Activated CD4-positive, alpha-beta T cell treated with anti-CD3 and anti-CD28 coated beads for 36 hours (primary cell): ENCODE measurements at regions of chr15 and their contacts with region 1.

Region 1: GRCh38 chr15:37100109-37100965 is at the start of gene MEIS2:
- DNase-seq: peak; percentile 70
- ATAC-seq: peak; percentile 63
- H3K4me3 Mint-ChIP-seq: peak within 1 kb of the TSS; percentile 80
- H3K27ac Mint-ChIP-seq: peak within 1 kb of the TSS; percentile 51
- H3K4me1 Mint-ChIP-seq: peaks cover 37% of the 10 kb centered on the region
- H3K27me3 Mint-ChIP-seq: peaks cover 82% of the 10 kb centered on the region
- total RNA-seq, gene MEIS2: not detected

Region 2: DNA sequence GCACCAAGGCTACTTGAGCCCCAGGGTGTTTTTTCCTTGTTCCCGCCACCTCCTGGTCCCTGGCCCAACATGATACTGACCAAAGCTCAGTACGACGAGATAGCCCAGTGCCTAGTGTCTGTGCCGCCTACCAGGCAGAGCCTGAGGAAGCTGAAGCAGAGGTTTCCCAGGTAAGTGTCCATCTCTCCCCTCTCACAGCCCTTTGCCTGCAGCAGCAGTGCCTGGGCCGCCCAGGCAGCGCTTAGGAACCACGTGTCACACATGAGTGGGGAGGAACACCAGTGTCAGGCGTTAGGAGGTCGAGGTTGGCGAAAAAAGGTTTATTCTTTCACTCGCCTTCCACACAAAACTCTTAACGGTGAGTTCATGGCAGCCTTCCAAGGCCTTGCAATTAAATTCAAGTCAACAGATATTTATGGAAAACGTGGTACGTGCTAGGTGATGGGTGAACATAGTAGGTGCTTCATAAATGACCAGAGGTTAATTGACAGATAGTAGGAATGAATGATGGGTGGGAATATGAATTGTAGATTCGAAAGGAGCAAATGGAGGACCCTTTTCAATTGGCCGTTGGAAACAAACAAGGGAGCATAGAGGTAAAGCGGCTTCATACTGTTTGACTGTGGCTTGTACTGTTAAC is 520.4 kb before region 1 on chr15:
- CTCF ChIA-PET with region 1: no interaction called
- POLR2A ChIA-PET with region 1: no interaction called
- intact Hi-C with region 1: loop called in 1 of 2 experiments (anchors 5 kb)
- DNase-seq: peak; percentile 53
- ATAC-seq: peak; percentile 23
- H3K4me3 Mint-ChIP-seq: peak overlapping the region; percentile 81
- H3K27ac Mint-ChIP-seq: peak overlapping the region; percentile 93
- H3K4me1 Mint-ChIP-seq: peaks cover 24% of the 10 kb centered on the region
- H3K27me3 Mint-ChIP-seq: peaks cover 2% of the 10 kb centered on the region